IMR-90 (cell line): ENCODE measurements at regions of chr1 and their contacts with region 1.

Region 1: DNA sequence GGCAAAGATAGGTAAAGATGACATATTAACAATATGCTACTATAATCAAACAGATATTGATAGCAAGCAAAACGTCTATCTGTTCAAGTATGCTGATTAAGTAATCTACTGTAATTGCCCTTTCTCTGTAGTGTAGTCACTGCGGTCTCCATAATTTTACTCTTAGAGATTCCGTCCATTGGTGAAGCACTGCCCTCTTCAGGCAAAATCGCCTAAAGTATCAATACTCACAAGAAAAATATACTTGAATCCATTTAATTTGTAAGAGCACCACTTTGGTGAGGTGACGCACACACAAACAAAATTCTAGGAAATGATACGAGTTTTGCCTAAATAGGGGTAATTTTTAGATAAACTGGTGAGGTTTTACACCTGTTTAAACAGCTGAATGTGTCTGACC is 434.6 kb upstream of the CHRM3 start:
- DNase-seq: peak; percentile 33
- ATAC-seq: 0 out of 2 replicates have a peak, but pooled peaks have one; percentile 37
- H3K4me3 ChIP-seq: no peak overlapping the region
- H3K27ac ChIP-seq: no peak overlapping the region
- H3K4me1 ChIP-seq: no peaks in the 10 kb centered on the region
- H3K27me3 ChIP-seq: no peaks in the 10 kb centered on the region
- CTCF ChIP-seq: peak; percentile 50
- POLR2A ChIP-seq: no peak
- RAD21 ChIP-seq: peak; percentile 61

Region 2: DNA sequence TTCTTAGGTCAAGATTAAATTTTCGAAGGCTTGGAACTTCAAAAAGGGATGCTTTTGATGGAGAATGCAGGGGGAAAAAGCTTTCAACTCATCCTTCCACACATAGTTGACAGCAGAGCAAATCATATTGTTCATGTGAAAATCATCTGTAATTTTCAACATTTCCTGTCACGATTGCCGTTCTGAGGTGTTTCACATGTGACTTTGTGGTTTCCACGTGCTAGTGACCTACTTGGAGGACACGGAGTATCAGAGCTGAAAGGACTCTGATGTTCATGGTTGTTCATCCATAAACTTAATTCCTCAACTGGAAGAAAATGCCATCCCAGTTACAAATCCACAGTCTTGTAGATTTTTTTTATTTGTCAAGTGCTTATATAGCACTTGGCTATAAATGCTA is 1140.2 kb before region 1 on chr1:
- CTCF ChIA-PET with region 1: no interaction called
- POLR2A ChIA-PET with region 1: no interaction called
- dilution Hi-C with region 1: no loop called
- in situ Hi-C with region 1: no loop called
- intact Hi-C with region 1: loop called (anchors 5 kb)
- DNase-seq: no peak
- ATAC-seq: no peak
- H3K4me3 ChIP-seq: no peak overlapping the region
- H3K27ac ChIP-seq: no peak overlapping the region
- H3K4me1 ChIP-seq: no peaks in the 10 kb centered on the region
- H3K27me3 ChIP-seq: no peaks in the 10 kb centered on the region
- CTCF ChIP-seq: no peak
- POLR2A ChIP-seq: no peak
- RAD21 ChIP-seq: no peak

Region 3: GRCh38 chr1:237851210-237851845 is 1100.5 kb before region 1 on chr1:
- CTCF ChIA-PET with region 1: interaction called, 3 read pairs
- POLR2A ChIA-PET with region 1: no interaction called
- dilution Hi-C with region 1: no loop called
- in situ Hi-C with region 1: no loop called
- intact Hi-C with region 1: loop called (anchors 1 kb)
- DNase-seq: peak; percentile 35
- ATAC-seq: peak; percentile 71
- H3K4me3 ChIP-seq: no peak overlapping the region
- H3K27ac ChIP-seq: no peak overlapping the region
- H3K4me1 ChIP-seq: no peaks in the 10 kb centered on the region
- H3K27me3 ChIP-seq: no peaks in the 10 kb centered on the region
- CTCF ChIP-seq: peak; percentile 63
- POLR2A ChIP-seq: no peak
- RAD21 ChIP-seq: peak; percentile 69

Region 4: DNA sequence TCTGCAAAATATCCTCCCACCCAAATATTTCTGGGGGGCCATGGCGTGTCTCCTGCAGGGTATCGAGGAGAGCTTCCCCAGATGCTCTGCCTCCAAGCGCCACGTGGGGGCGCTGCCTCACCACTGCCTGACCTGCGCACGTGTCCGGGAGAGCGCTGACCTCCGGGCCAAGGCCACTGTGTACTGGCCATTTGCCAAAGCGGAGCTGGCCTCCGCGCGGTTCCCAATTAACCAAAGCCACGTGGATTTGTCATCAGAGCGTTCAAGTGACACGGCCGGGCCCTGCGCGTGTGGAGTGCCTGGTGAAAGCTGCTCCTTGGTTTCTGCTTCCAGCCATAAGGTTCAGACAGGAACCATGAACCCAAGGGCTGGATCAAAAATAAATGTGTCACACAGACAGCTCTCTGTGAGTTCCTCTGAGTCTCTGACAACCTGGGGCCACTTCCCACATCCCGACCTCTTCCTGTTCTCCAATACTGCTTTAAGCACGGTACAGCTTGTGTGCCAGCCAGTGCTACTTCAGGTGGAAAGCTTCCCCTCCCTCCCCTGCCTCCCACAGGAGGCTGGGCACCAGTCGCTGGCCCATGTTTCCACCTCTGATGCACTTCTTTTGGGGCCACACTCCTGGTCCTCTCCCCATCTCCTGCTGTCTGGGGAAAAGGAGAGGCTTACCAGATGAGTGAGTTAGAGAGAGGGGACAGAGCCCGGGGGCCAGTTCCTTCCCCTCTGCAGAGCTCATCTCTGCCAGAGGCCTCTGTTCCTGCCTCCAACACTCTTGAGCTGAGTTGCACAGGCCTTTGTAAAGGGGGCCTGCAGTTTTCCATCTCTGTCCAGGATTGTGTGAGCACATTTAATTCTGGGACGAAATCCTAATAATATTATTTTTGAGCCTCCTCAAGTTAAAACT is 1087.2 kb before region 1 on chr1:
- CTCF ChIA-PET with region 1: interaction called, 5 read pairs
- POLR2A ChIA-PET with region 1: no interaction called
- dilution Hi-C with region 1: no loop called
- in situ Hi-C with region 1: no loop called
- intact Hi-C with region 1: loop called (anchors 2 kb)
- DNase-seq: no peak
- ATAC-seq: peak; percentile 79
- H3K4me3 ChIP-seq: peak overlapping the region; percentile 26; the same call in 1 of the 2 replicates
- H3K27ac ChIP-seq: no peak overlapping the region
- H3K4me1 ChIP-seq: no peaks in the 10 kb centered on the region
- H3K27me3 ChIP-seq: no peaks in the 10 kb centered on the region
- CTCF ChIP-seq: peak; percentile 67
- POLR2A ChIP-seq: no peak
- RAD21 ChIP-seq: peak; percentile 72

Region 5: DNA sequence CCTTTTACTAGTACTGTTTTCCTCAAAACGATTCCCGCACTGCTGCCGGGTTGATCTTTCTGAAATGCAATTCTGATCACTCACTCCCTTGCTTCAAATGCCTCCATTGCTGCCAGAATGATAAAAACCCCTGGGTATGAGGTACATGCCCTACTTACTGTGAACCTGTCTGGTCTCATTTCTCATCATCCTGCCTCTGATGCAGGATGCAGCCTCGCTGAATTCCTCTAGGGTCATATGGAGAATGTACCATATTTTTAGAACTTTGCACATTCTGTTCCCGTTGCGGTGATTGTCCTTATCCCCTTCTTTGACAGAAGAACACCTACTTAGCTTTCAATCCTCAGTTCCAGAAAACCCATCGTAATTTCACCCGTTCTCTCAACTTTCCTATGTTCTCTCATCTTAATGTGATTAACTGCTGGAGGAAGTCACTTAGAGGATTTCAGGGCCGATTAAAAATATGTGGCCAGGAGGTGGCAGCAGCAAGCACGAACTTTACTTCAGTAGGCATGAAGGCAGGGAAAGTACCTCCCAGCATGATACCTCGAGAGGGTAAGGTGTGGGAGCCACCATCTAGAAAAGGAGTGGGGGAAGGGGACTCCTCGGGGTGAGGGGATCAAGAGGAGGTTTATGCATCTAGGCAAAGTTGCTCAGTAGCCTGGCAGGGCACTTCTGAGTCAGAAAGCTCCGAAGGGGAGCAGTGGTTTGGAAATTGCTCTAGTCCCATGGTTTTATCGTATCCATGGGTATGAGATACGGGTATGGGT is 699.6 kb before region 1 on chr1:
- CTCF ChIA-PET with region 1: no interaction called
- POLR2A ChIA-PET with region 1: no interaction called
- dilution Hi-C with region 1: no loop called
- in situ Hi-C with region 1: no loop called
- intact Hi-C with region 1: loop called (anchors 1 kb)
- DNase-seq: peak; percentile 33
- ATAC-seq: peak; percentile 70; the same call in 1 of the 2 replicates
- H3K4me3 ChIP-seq: no peak overlapping the region
- H3K27ac ChIP-seq: no peak overlapping the region
- H3K4me1 ChIP-seq: no peaks in the 10 kb centered on the region
- H3K27me3 ChIP-seq: no peaks in the 10 kb centered on the region
- CTCF ChIP-seq: peak; percentile 45
- POLR2A ChIP-seq: no peak
- RAD21 ChIP-seq: peak; percentile 54

Region 6: GRCh38 chr1:238991765-238992495 is 40.1 kb after region 1 on chr1:
- CTCF ChIA-PET with region 1: no interaction called
- POLR2A ChIA-PET with region 1: no interaction called
- dilution Hi-C with region 1: no loop called
- in situ Hi-C with region 1: no loop called
- intact Hi-C with region 1: no loop called
- DNase-seq: no peak
- ATAC-seq: no peak
- H3K4me3 ChIP-seq: no peak overlapping the region
- H3K27ac ChIP-seq: no peak overlapping the region
- H3K4me1 ChIP-seq: no peaks in the 10 kb centered on the region
- H3K27me3 ChIP-seq: no peaks in the 10 kb centered on the region
- CTCF ChIP-seq: no peak
- POLR2A ChIP-seq: no peak
- RAD21 ChIP-seq: no peak